ENCODE measurements at regions of chr5 and their contacts with region 1.

Region 1: DNA sequence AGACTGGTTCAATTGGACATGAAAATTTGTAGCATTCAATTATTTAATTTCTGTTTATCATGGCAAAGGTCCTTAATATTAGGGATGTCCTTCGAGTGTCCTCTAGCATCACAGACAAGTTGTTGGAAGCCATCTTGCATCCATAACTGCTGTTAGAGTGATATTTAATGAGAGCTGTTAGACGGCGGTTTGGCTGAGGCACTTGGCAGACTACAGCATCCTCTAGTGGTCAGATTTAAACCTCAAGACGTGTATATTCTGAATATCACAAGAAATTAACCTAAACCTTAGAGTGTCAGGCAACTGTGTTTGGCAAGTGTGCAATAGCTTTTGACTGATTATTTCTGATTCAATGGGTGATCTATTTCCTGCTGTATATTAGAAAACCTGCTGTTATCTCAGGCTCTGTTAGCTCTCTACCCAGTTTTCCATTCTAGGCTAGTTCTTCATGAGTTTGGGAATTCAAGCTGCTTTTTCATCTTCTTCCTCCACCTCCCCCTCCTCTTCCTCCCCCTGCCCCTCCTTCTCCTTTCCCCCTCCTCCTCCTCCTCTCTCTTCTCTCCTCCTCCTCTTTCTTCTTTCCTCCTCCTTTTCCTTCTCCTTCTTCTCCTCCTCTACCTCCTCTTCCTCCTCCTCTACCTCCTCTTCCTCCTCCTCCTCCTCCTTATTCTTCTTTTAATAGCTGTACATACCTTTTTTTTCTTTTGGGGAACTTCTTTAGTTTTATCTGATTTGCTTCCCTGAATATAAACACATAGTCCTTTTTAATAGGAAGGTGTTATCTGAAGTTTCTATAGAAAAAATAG is 8.6 kb downstream of the SPINK1 start:
- DNase-seq: no peak

Region 2: GRCh38 chr5:147628058-147628895 is 194.6 kb before region 1 on chr5:
- intact Hi-C with region 1: loop called (anchors 5 kb)
- DNase-seq: no peak